Activated CD8-positive, alpha-beta memory T cell treated with anti-CD3 and anti-CD28 coated beads, Interleukin-2, amount 10 ng/mL, durations not matched to agents 7 days and 5 days (primary cell): ENCODE measurements at regions of chr9 and their contacts with region 1.

Region 1: DNA sequence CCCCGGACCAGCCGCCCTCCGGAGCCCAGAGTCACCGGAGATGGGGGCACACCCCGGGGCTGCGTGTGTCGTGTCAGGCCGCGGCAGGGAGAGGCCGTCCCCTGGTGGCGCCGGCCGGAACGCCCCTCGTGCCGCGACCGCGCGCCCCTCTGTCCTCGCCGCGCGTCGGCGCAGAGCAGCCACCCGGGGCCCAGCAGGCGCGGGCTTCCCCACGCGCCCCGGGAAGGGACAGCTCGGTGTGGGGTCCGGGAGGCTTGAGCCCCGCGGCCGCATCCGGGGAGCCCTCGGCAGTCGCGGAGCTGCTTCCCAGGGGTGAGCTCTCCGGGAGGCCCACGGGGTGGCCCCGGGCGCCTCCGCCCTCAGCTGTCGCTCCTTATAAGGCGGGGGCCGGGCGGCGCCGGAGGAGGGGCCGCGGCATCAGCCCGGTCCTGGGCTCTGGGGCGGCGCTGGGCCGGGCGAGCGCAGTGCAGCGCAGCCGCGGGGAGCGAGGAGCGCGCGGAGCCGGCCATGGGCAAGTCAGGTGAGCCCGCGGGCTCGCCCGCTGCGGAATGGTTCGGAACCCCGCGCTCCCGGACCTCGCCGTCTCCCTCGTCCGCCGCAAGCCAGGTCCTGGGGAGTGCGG is at the start of gene GLIPR2:
- DNase-seq: peak; percentile 85
- ATAC-seq: peak; percentile 99
- H3K4me3 Mint-ChIP-seq: peak within 1 kb of the TSS; percentile 99
- H3K27ac Mint-ChIP-seq: peak within 1 kb of the TSS; percentile 66
- H3K4me1 Mint-ChIP-seq: peaks cover 46% of the 10 kb centered on the region
- H3K27me3 Mint-ChIP-seq: peaks cover 19% of the 10 kb centered on the region
- total RNA-seq, gene GLIPR2: 28.4 to 49.8 TPM

Region 2: GRCh38 chr9:36148311-36149051 is 12.1 kb after region 1 on chr9:
- CTCF ChIA-PET with region 1: interaction called, 49 read pairs
- DNase-seq: peak; percentile 92
- ATAC-seq: peak; percentile 43
- H3K4me3 Mint-ChIP-seq: no peak overlapping the region
- H3K27ac Mint-ChIP-seq: peak overlapping the region; percentile 69
- H3K4me1 Mint-ChIP-seq: peaks cover 90% of the 10 kb centered on the region
- H3K27me3 Mint-ChIP-seq: no peaks in the 10 kb centered on the region

Region 3: GRCh38 chr9:36174731-36175130 is 38.3 kb after region 1 on chr9:
- CTCF ChIA-PET with region 1: no interaction called
- DNase-seq: no peak
- ATAC-seq: no peak
- H3K4me3 Mint-ChIP-seq: no peak overlapping the region
- H3K27ac Mint-ChIP-seq: no peak overlapping the region
- H3K4me1 Mint-ChIP-seq: peaks cover 13% of the 10 kb centered on the region
- H3K27me3 Mint-ChIP-seq: peaks cover 7% of the 10 kb centered on the region

Region 4: DNA sequence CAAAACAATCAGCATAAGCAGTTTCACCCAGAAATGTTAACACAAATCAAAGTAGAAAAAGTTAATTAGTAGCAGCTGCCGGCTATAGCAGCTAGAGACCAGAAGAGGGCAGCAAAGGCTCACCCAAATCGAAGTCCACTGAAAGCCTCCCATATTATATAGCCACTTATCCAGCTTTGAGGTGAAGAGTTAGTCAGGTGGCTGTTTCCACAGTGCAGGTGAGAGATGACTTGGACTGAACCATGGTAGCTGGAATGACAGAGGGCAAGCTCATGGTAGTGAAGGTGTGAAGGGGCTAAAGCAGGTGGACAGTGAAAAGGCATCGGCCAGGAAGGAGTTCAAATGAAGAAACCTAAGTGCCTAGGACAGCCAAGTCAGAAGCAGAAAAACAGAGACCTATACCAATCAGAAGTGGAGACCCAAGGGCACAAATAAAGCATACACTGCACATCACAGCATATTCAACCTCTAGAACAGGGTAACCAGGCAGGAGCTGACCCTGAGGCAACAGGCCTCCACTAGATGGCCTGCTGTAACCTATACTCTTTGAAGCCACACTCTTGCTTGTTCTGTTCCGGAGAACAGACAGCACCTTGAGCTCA is 270.8 kb after region 1 on chr9:
- CTCF ChIA-PET with region 1: no interaction called
- DNase-seq: peak; percentile 71
- ATAC-seq: peak; percentile 82
- H3K4me3 Mint-ChIP-seq: no peak overlapping the region
- H3K27ac Mint-ChIP-seq: peak overlapping the region; percentile 29
- H3K4me1 Mint-ChIP-seq: peaks cover 5% of the 10 kb centered on the region
- H3K27me3 Mint-ChIP-seq: no peaks in the 10 kb centered on the region